MCF 10A (cell line): ENCODE measurements at regions of chr6 and their contacts with region 1.

Region 1: DNA sequence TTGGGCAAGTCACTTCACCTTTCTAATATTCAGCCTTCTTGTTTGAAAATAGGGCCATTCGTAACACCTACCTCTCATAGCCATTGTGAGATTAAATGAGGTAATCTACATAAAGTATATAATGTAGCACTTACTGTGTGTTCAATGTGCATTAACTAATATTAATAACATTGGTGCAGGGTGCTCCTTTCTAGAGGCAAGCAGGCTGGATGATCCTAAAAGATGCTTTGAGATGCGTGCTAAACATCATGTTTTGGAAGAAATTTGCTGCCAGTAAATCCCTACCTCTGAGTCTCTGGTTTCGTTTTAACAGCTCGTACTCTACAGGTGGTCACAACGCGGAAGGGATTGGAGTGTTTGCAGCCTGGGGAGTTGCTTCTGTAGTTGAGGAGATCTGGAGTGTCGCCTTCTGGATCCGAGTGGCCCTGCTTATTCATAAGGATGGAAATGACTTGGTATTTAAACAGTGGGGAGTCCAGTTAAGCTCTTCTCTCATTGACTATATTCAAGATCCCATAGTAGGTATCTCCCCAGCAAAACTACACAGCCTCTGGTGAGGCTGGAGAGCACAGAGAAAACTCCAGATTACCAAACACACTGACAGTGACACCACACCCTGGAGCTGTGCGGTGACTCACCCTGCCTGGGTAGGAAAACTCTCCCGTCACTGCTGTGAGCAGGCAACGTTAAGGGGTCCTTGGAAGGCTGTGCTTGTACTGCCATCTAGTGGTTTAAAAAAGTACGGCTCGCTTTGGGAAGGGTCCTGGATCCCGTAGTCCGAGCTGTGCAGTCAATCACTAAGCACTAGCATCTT is 107.9 kb downstream of the MAP3K7 start:
- DNase-seq: peak; percentile 96
- H3K4me3 Mint-ChIP-seq: no peak overlapping the region
- H3K27ac Mint-ChIP-seq: peak overlapping the region; percentile 32
- H3K4me1 Mint-ChIP-seq: peaks cover 18% of the 10 kb centered on the region
- H3K27me3 Mint-ChIP-seq: no peaks in the 10 kb centered on the region
- CTCF ChIP-seq: peak; percentile 71

Region 2: GRCh38 chr6:89909991-89910390 is 569.0 kb before region 1 on chr6:
- CTCF ChIA-PET with region 1: no interaction called
- POLR2A ChIA-PET with region 1: no interaction called
- intact Hi-C with region 1: no loop called
- DNase-seq: no peak
- H3K4me3 Mint-ChIP-seq: no peak overlapping the region
- H3K27ac Mint-ChIP-seq: no peak overlapping the region
- H3K4me1 Mint-ChIP-seq: no peaks in the 10 kb centered on the region
- H3K27me3 Mint-ChIP-seq: no peaks in the 10 kb centered on the region
- CTCF ChIP-seq: no peak

Region 3: DNA sequence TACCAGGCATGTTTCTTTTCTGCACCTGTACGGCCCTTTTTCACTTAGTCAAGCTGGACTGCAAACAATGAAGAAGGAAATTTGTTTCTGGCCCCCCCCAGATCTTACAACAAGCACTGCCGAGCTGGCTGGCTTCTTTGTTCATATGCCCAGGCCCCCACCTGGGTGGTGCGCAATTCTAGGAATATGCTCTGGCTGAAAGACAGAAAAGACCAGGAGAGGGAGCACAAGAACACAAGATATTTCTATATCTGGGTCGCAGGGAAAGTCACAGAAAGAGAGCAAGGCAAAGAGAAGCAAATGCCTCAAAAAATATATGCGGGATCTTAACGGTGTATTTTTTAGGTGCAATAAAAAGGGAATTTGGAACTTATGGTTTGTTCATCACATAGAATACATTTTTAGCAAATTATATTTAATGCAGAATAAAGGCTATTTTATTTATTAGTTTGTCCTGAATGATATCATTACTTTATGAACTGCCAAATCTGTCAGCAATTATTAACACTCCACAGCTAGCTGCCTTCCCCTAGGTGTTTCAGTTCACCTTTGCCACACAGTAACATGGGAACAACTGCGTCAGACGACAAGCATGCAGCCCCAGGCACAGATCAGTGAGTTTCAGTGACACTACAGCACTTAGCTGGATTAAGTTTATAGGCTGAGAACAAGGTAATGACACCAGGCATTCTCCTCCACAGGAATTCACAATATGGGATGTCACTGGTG is 508.2 kb before region 1 on chr6:
- CTCF ChIA-PET with region 1: interaction called, 61 read pairs
- POLR2A ChIA-PET with region 1: no interaction called
- intact Hi-C with region 1: loop called (anchors 1 kb)
- DNase-seq: peak; percentile 68
- H3K4me3 Mint-ChIP-seq: no peak overlapping the region
- H3K27ac Mint-ChIP-seq: no peak overlapping the region
- H3K4me1 Mint-ChIP-seq: no peaks in the 10 kb centered on the region
- H3K27me3 Mint-ChIP-seq: no peaks in the 10 kb centered on the region
- CTCF ChIP-seq: peak; percentile 58

Region 4: DNA sequence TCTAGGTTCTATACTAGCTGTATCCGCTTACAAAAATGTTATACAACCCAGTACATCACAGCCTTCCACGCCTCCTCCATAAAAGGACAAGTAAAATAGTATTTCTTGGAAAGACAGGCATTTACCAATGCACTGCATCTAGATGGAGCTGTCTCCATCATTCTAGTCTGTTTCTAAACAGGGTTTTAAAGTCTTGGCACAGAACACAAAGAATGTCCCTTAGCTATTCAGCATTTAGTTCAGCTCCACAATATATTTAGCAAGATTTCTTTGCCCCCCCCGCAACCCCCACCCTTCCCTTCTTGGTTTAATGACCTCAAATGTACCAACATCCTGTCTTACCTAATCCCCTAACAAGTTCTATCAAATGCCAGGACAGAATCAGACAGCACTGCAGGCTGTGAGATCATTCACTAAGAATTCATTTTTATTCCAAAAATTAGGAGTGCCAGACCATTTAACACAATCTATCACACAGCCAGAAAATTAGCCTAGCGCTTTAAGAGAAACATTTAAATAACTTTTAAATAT is 380.9 kb before region 1 on chr6:
- CTCF ChIA-PET with region 1: interaction called, 32 read pairs
- POLR2A ChIA-PET with region 1: no interaction called
- intact Hi-C with region 1: loop called (anchors 1 kb)
- DNase-seq: peak; percentile 97
- H3K4me3 Mint-ChIP-seq: no peak overlapping the region
- H3K27ac Mint-ChIP-seq: peak overlapping the region; percentile 96
- H3K4me1 Mint-ChIP-seq: peaks cover 43% of the 10 kb centered on the region
- H3K27me3 Mint-ChIP-seq: no peaks in the 10 kb centered on the region
- CTCF ChIP-seq: peak; percentile 40

Region 5: DNA sequence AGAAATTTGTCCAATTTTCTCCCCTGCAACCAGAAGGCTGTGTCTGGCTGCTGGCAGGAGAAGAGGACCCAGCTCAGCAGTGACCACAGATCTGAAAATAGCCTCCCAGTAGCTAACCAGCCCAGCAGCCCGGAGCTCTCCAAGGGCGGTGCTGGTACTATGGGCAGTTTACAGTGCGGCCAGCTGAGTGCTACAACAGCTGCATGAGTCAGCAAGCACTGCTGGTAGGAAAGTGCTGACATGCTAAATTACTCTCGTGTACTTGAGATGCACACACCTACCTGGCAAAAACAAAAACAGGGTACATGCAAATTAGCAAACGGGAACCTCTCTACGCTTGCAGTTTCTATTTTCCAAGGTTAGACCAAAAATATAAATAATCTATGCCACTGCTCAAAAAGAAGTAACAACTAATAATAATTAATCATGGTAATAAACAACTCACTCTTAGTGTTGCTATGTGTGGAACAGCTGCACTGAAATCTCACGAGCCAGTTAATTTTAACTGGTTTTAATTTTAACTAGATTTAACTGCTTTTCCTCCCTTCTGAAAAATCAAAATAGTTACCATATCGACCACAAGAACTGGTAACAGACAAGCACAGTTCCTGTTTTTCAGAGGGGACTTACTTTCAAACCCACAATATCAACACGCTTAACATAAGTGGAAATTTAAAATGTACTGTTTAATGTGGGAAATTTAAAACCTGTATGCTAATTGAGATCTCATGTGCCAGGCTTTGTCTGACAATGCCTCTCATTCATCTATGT is 193.2 kb before region 1 on chr6:
- CTCF ChIA-PET with region 1: interaction called, 54 read pairs
- POLR2A ChIA-PET with region 1: interaction called, 5 read pairs
- intact Hi-C with region 1: loop called (anchors 1 kb)
- DNase-seq: peak; percentile 89
- H3K4me3 Mint-ChIP-seq: no peak overlapping the region
- H3K27ac Mint-ChIP-seq: no peak overlapping the region
- H3K4me1 Mint-ChIP-seq: peaks cover 9% of the 10 kb centered on the region
- H3K27me3 Mint-ChIP-seq: no peaks in the 10 kb centered on the region
- CTCF ChIP-seq: no peak

Region 6: GRCh38 chr6:90448836-90449235 is 30.2 kb before region 1 on chr6:
- CTCF ChIA-PET with region 1: no interaction called
- POLR2A ChIA-PET with region 1: no interaction called
- intact Hi-C with region 1: no loop called
- DNase-seq: no peak
- H3K4me3 Mint-ChIP-seq: no peak overlapping the region
- H3K27ac Mint-ChIP-seq: no peak overlapping the region
- H3K4me1 Mint-ChIP-seq: no peaks in the 10 kb centered on the region
- H3K27me3 Mint-ChIP-seq: no peaks in the 10 kb centered on the region
- CTCF ChIP-seq: no peak

Region 7: GRCh38 chr6:90466154-90466940 is 12.6 kb before region 1 on chr6:
- CTCF ChIA-PET with region 1: interaction called, 11 read pairs
- POLR2A ChIA-PET with region 1: no interaction called
- intact Hi-C with region 1: no loop called
- DNase-seq: no peak
- H3K4me3 Mint-ChIP-seq: no peak overlapping the region
- H3K27ac Mint-ChIP-seq: peak overlapping the region; percentile 69
- H3K4me1 Mint-ChIP-seq: peaks cover 43% of the 10 kb centered on the region
- H3K27me3 Mint-ChIP-seq: no peaks in the 10 kb centered on the region
- CTCF ChIP-seq: no peak